Right cardiac atrium (tissue), 5 donors: ENCODE measurements at regions of chr21 and their contacts with region 1.

Region 1: DNA sequence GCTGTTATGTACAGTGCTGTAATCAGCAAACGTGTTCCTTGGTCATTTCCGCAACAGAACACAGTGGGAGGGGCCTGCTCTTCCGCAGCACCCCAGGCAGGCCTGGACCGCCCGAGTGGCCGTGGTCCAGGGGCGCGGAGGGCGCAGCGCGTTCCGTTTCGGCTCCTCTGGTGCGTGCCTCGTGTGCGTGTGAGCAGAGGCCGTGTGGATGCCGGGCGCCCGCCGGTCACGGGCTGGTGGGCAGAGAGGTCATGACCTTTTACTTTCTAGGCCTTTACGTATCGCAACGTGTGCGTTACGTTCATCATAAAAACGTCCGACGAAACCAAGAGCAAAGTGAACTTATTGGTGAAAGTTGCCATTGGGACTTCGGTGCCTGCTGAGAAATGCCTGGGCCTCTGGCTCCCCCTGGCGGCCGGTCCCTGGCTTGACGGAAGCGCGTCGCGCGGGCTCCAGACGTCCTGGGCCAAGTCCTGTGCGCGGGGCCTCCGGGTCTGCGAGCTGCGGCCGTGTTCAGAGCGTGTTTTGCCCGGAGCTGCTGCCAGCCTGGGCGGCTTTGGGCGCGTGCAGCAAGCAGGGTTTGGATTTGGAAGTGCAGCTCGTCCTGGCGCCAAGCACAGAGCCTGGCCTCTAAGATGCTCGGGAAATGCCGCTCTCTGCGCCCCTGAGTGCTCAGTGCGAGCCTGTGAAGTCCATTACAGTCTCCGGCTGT is 34.4 kb downstream of the COL18A1 start:
- DNase-seq: peak; percentile 85 to 95 (median 94)
- ATAC-seq: peak; percentile 86 to 87
- H3K4me3 ChIP-seq: peak overlapping the region; percentile 7
- H3K27ac ChIP-seq: peak overlapping the region; percentile 18
- H3K4me1 ChIP-seq: peaks cover 2% of the 10 kb centered on the region
- H3K27me3 ChIP-seq: no peaks in the 10 kb centered on the region

Region 2: GRCh38 chr21:44592446-44593311 is 846.6 kb before region 1 on chr21 and contains the start of gene KRTAP10-6:
- intact Hi-C with region 1: no loop called
- DNase-seq: peak in 1 of 3 donors; percentile 45
- ATAC-seq: peak; percentile 17 to 26
- H3K4me3 ChIP-seq: no peak within 1 kb of the TSS
- H3K27ac ChIP-seq: no peak within 1 kb of the TSS
- H3K4me1 ChIP-seq: no peaks in the 10 kb centered on the region
- H3K27me3 ChIP-seq: no peaks in the 10 kb centered on the region
- total RNA-seq, gene KRTAP10-6: not detected

Region 3: GRCh38 chr21:45386721-45387371 is 52.5 kb before region 1 on chr21:
- intact Hi-C with region 1: loop called in 2 of 4 experiments (anchors 5 to 10 kb)
- DNase-seq: peak; percentile 52 to 82 (median 78)
- ATAC-seq: peak; percentile 58 to 66
- H3K4me3 ChIP-seq: no peak overlapping the region
- H3K27ac ChIP-seq: no peak overlapping the region
- H3K4me1 ChIP-seq: no peaks in the 10 kb centered on the region
- H3K27me3 ChIP-seq: no peaks in the 10 kb centered on the region